ENCODE measurements at regions of chr2 and their contacts with region 1.

Region 1: GRCh38 chr2:170361090-170361936 is 183.4 kb downstream of the MYO3B start:
- DNase-seq: peak; percentile 32
- H3K4me3 ChIP-seq: peak overlapping the region in 1 of 2 experiments; percentile 28; a peak in 1 of 4 replicates
- H3K27ac ChIP-seq: no peak overlapping the region
- H3K4me1 ChIP-seq: no peaks in the 10 kb centered on the region
- H3K27me3 ChIP-seq: peaks cover 8% of the 10 kb centered on the region; the same call in 1 of the 2 replicates
- CTCF ChIP-seq: peak; percentile 76
- EP300 ChIP-seq: no peak
- RAD21 ChIP-seq: peak; percentile 59

Region 2: DNA sequence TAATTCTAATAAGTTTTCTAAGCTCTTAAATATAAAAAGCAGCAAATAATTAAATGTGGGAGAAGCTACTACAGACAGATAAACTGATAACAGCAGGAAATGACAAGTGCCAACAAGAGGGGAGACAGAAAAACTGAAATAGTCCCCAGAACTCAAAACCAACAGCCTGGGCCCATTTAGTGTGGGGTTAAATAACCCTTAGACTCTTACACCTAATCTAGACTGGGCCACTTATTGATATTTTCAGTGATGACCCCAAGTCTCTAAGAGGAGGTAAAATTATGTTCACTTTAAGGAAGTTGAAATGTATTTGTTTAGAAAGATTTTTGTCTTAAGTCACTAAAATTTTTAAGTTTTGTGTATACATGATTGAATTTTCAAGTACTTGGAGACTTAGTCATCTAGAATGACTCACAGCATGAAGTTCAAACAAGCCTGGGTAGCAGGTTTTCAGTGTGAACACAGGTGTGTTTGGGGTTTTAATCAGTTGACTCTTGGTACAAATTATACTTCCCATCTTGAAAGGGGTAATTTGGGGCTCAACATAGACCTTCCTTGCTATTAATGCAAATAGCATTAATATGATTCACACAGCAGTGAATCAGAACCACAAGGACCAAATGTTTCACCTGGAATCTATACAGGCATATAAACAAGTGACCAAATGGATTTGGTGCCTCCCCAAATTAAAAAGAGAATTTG is 238.3 kb before region 1 on chr2:
- CTCF ChIA-PET with region 1: no interaction called
- POLR2A ChIA-PET with region 1: no interaction called
- DNase-seq: no peak
- H3K4me3 ChIP-seq: no peak overlapping the region
- H3K27ac ChIP-seq: no peak overlapping the region
- H3K4me1 ChIP-seq: no peaks in the 10 kb centered on the region
- H3K27me3 ChIP-seq: no peaks in the 10 kb centered on the region
- CTCF ChIP-seq: no peak
- EP300 ChIP-seq: no peak
- RAD21 ChIP-seq: no peak

Region 3: DNA sequence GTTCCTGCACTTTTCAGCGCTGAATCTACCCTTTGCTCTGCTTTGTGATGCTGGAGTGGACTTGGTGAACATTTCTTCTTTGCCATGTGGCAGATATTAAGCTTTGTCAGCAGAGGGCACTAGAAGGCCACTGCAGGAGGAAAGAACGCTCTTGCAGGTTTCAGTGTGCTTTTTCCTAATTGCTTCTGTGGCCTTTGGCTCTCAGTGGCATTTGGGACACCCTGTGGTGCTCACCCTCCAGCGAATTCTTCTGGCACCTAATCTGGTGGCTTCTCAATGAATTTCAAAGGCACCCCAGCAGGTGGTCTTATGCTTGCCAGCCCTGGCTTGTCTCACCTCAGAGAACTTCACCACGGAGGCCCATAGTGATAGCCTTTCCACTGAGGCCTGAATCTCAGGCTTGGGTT is 36.7 kb before region 1 on chr2:
- CTCF ChIA-PET with region 1: interaction called, 17 read pairs
- POLR2A ChIA-PET with region 1: no interaction called
- DNase-seq: peak; percentile 24
- H3K4me3 ChIP-seq: peak overlapping the region in 1 of 2 experiments; percentile 31; a peak in 1 of 4 replicates
- H3K27ac ChIP-seq: no peak overlapping the region
- H3K4me1 ChIP-seq: no peaks in the 10 kb centered on the region
- H3K27me3 ChIP-seq: no peaks in the 10 kb centered on the region
- CTCF ChIP-seq: peak; percentile 62
- EP300 ChIP-seq: no peak
- RAD21 ChIP-seq: peak; percentile 83

Region 4: GRCh38 chr2:170341684-170342623 is 19.4 kb before region 1 on chr2:
- CTCF ChIA-PET with region 1: interaction called, 15 read pairs
- POLR2A ChIA-PET with region 1: no interaction called
- DNase-seq: no peak
- H3K4me3 ChIP-seq: no peak overlapping the region
- H3K27ac ChIP-seq: no peak overlapping the region
- H3K4me1 ChIP-seq: no peaks in the 10 kb centered on the region; a peak in 1 of 4 replicates
- H3K27me3 ChIP-seq: no peaks in the 10 kb centered on the region
- CTCF ChIP-seq: no peak
- EP300 ChIP-seq: no peak
- RAD21 ChIP-seq: no peak

Region 5: DNA sequence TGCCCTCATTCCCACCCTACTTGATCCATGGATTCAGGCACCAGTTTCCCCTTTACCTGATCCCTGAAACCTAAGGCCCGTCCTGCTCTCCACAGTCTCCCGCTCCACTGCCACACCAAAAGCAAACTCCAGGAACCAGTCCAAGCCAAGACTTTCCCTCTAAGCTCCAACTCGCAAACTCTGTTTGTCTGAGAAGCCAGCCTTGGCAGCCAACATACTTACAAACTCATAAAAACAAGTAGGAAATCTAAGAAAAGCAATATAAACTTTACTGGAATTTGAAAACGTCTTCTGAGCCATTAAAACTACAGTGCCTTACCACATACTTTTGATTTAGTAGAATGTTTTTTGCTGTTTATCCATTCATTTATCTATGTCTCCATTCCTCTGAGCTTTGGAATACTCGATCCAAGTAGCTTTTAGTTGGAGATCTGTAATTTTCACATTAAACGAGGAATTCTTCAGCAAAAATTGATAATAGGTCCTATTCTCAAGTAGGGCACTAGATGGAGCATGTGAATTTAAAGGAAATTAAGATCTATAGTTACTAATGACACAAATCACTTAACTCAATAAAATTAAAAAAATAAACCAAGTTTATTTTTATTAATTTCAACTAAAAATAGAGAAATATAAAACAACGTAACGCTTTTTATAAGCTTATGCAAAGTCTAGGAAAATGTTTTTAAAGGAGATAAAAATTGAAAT is 16.3 kb after region 1 on chr2:
- CTCF ChIA-PET with region 1: interaction called, 20 read pairs
- POLR2A ChIA-PET with region 1: no interaction called
- DNase-seq: no peak
- H3K4me3 ChIP-seq: no peak overlapping the region
- H3K27ac ChIP-seq: no peak overlapping the region
- H3K4me1 ChIP-seq: no peaks in the 10 kb centered on the region
- H3K27me3 ChIP-seq: no peaks in the 10 kb centered on the region
- CTCF ChIP-seq: peak; percentile 29
- EP300 ChIP-seq: no peak
- RAD21 ChIP-seq: no peak

Measured in SK-N-SH (cell line).